CD4-positive, alpha-beta memory T cell (primary cell): ENCODE measurements at regions of chr1 and their contacts with region 1.

Region 1: GRCh38 chr1:193609592-193609991 is 423.2 kb upstream of the B3GALT2 start:
- DNase-seq: peak in 1 of 5 donors; percentile 25
- H3K4me3 ChIP-seq: no peak overlapping the region
- H3K4me3 Mint-ChIP-seq: peak overlapping the region in 6 of 8 donors; percentile 6 to 64 (median 55)
- H3K27ac ChIP-seq: no peak overlapping the region
- H3K27ac Mint-ChIP-seq: peak overlapping the region; percentile 17 to 91 (median 77)
- H3K4me1 ChIP-seq: peaks cover 13% of the 10 kb centered on the region
- H3K4me1 Mint-ChIP-seq: peaks cover 20 to 40% (median 26%) of the 10 kb centered on the region in 4 donors
- H3K27me3 ChIP-seq: no peaks in the 10 kb centered on the region
- H3K27me3 Mint-ChIP-seq: no peaks in the 10 kb centered on the region

Region 2: DNA sequence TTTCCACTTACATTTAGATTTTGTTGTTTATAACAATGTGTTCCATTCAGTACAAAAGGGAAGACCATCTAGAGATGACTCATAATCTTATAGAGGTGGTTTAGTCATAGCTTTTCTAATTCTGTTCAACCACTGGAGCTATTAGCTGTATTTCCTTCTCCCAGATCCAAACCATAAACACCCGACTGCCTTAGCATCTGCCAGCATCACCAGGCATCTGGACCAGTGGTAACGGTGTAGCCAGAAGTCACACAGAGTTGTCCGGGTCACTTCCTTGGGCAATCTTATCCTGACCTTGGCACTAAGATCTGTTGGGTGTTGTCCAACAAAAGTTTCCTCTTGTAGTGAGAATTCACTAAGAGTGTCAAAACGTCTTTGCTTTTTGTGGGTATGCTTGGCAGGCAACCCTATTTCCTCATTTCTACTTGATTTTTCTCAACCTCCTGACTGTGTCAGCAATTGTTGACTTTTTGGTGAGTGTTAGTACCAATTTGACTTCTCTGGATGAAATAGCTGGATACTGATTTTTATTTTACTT is 51.0 kb before region 1 on chr1:
- CTCF ChIA-PET with region 1: no interaction called
- POLR2A ChIA-PET with region 1: no interaction called
- intact Hi-C with region 1: no loop called
- DNase-seq: peak in 2 of 5 donors; percentile 17 to 45
- H3K4me3 ChIP-seq: no peak overlapping the region
- H3K4me3 Mint-ChIP-seq: peak overlapping the region in 7 of 8 donors; percentile 7 to 65 (median 39)
- H3K27ac ChIP-seq: no peak overlapping the region
- H3K27ac Mint-ChIP-seq: peak overlapping the region; percentile 48 to 96 (median 81)
- H3K4me1 ChIP-seq: peaks cover 12% of the 10 kb centered on the region
- H3K4me1 Mint-ChIP-seq: peaks cover 11 to 31% (median 18%) of the 10 kb centered on the region in 4 donors
- H3K27me3 ChIP-seq: no peaks in the 10 kb centered on the region
- H3K27me3 Mint-ChIP-seq: no peaks in the 10 kb centered on the region

Region 3: GRCh38 chr1:193589597-193590040 is 20.0 kb before region 1 on chr1:
- CTCF ChIA-PET with region 1: no interaction called
- POLR2A ChIA-PET with region 1: interaction called, 4 read pairs
- intact Hi-C with region 1: loop called (anchors 1 kb)
- DNase-seq: no peak
- H3K4me3 ChIP-seq: no peak overlapping the region
- H3K4me3 Mint-ChIP-seq: peak overlapping the region in 3 of 8 donors; percentile 2 to 52 (median 2)
- H3K27ac ChIP-seq: no peak overlapping the region
- H3K27ac Mint-ChIP-seq: peak overlapping the region in 6 of 7 donors; percentile 14 to 86 (median 78)
- H3K4me1 ChIP-seq: peaks cover 40% of the 10 kb centered on the region
- H3K4me1 Mint-ChIP-seq: peaks cover 29 to 45% (median 37%) of the 10 kb centered on the region in 4 donors
- H3K27me3 ChIP-seq: no peaks in the 10 kb centered on the region
- H3K27me3 Mint-ChIP-seq: no peaks in the 10 kb centered on the region